AG04449 (cell line): ENCODE measurements at regions of chr5 and their contacts with region 1.

Region 1: DNA sequence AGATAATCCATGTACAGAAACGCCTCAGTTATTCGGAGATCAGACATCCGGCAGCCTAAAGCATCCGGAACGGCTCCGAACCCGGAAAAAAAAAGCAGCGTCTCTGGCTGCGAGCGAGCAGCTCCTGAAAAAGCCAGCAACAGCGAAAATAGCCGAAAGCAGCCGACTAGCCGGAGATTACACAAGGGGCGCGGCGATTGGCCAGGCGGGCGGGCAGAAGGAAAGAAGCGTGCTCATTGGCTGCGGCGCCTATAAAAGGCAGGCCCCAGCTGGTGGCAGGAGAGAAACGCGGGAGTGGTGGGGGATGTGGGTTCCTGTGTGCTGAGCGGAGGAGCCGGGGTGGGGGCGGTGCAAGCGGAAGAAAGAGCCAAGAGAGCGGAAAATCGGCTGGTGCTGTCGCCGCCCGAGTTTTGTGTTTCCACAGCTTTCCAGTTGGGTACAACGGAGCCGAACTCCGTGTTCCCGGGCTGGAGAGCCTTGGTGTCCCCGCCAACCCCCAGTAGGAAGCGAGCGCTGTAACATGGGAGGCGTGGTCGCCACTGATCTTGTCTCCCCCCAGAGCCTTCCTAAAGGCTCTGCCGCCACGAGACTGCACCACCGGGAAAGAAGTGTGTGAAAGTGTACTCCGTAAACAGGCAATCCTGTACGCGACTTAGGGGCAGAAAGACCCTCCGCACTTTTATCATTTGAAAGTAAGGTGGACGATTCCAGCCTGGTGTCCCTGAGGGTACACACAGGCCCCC is at the start of gene ARL15:
- DNase-seq: peak; percentile 73
- H3K4me3 ChIP-seq: peak within 1 kb of the TSS; percentile 83
- CTCF ChIP-seq: no peak

Region 2: DNA sequence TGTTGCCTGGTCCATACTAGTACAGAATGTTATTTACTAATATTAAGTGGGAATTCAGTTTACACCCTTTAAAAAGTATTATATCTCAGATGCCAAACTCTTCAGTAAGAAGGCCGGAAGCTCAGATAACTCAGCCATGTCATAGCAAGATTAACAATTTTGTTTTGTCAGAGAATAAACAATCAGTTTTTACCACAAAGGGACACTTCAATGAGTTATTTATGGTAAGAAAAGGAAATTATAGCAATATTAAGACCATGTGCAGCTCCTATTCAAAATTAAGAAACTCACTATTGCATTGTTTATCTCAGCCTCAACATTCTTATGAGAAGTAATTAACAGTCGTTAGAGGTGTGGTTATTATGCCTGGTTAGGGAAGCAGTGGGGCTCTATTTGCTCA is 12.9 kb after region 1 on chr5:
- CTCF ChIA-PET with region 1: interaction called, 13 read pairs
- POLR2A ChIA-PET with region 1: interaction called, 23 read pairs
- DNase-seq: no peak
- H3K4me3 ChIP-seq: no peak overlapping the region
- CTCF ChIP-seq: no peak

Region 3: DNA sequence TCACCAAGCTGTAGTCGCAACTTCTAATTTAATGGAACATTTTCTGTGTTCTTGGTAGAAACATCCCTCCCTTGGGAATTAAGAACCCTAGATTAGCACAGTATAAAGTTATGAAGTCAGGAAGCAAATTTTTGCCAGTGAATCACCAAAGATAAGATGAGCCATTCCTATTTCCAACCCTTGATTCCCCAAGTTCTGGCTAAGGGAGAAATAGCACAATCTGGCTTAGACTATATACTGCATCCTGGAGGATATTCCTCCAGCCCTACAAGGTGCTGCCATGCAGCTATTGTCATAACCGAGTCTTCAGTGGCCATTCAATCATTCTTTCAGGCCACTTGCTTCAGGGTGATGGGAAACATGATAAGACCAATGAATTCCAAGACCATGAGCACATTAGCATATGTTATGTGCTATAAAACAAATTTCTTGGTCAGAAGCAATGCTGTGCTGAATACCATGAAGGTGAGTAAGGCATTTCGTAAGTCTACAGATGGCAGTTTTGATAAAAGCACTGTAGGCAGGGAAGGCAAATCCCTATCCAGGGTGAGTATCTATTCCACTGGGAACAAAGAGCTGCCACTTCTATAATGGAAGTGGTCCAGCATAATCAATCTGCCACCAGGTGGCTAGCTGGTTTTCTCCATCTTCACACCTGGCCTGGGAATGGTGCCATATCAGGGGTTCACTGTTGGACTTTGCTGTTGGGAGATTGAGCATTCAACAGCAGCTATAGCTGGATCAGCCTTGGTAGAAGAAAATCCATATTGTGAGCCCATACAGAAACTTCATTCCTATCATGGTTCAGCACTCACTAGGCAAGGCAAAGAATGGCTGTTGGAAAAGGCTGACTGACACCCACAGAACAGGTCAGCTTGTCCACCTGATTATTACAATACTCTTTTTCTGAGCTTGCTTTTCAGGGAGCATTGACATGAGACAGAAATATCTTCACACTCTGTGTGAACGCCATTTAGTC is 19.4 kb after region 1 on chr5:
- CTCF ChIA-PET with region 1: interaction called, 13 read pairs
- POLR2A ChIA-PET with region 1: interaction called, 23 read pairs
- DNase-seq: peak; percentile 93
- H3K4me3 ChIP-seq: no peak overlapping the region
- CTCF ChIP-seq: no peak

Region 4: GRCh38 chr5:55037046-55037771 is 726.6 kb after region 1 on chr5:
- CTCF ChIA-PET with region 1: no interaction called
- POLR2A ChIA-PET with region 1: no interaction called
- DNase-seq: no peak
- H3K4me3 ChIP-seq: no peak overlapping the region
- CTCF ChIP-seq: no peak